BJ (cell line): ENCODE measurements at regions of chr10 and their contacts with region 1.

Region 1: DNA sequence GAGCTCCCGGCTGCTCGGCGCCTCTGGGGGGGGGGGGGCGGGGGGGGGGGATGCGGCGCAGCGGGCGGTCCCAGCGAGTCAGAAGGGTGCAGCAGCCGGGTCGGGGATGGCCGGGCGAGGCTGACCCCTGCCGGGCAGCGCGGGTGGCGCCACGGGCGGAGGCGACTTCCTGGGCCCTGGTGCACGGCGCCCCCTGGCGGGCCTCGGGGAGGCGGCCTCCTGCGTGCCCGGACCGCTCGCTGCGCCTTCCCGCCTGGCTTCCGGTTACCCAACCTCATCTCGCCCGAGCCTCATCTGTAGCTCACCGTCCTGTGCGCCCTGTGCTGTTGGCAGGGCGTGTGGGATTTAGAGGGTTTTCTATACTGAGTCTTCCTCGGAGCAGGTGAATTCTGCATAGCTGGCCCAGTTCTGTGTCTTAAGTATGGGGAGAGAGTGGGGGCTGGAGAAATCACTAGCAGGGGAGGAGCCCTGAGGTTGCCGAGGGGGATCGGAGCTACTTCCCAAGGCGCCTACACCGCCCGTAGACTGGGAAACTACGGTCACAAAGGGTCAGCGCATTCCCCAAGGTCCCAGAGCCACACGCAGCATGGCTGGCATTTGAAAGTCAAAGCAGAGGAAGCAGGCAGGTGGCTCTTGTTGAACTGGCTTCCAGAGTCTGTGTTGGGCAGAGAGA is 28.3 kb upstream of the WDFY4 start:
- DNase-seq: peak; percentile 36
- H3K4me3 ChIP-seq: peak overlapping the region; percentile 62
- H3K27me3 ChIP-seq: peaks cover 4% of the 10 kb centered on the region
- CTCF ChIP-seq: peak; percentile 59

Region 2: DNA sequence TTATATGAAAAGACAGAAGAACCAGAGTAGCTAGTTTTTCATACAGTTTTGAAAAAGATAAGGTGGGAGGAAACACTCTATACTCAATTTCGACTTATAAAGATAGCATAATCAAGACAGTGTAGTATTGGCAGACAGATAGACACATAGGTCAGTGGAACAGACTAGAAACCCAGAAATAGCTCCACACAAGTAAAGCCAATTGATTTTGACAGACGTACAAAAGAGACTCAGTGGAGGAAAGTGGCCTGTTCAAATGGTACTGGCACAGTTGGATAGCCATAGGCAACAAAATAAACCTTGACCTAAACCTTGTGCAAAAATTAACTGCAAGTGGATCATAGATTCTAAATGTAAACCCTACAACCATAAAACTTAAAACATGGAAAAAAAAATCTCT is 303.1 kb before region 1 on chr10:
- CTCF ChIA-PET with region 1: interaction called, 13 read pairs
- POLR2A ChIA-PET with region 1: no interaction called
- DNase-seq: no peak
- H3K4me3 ChIP-seq: no peak overlapping the region
- H3K27me3 ChIP-seq: no peaks in the 10 kb centered on the region
- CTCF ChIP-seq: no peak

Region 3: DNA sequence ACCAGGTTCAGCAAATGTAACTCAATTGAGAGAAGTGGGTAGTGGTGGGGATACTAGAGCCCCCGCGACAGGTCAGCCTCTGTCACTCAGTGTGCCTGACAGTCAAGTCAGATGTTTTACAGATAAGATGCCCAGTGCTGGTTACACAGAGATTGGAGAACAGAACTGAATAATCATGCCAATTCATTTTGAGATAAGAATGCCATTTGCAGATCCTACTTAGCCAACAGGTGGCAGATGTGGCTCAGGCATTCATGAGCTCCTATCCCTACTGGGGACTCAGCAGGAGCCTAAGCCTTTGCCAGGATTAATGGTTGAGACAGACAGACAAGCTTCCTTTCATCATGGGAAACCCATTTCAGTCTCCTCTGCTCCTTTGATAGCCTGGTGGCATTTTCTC is 212.1 kb before region 1 on chr10:
- CTCF ChIA-PET with region 1: interaction called, 21 read pairs
- POLR2A ChIA-PET with region 1: no interaction called
- DNase-seq: no peak
- H3K4me3 ChIP-seq: no peak overlapping the region
- H3K27me3 ChIP-seq: no peaks in the 10 kb centered on the region
- CTCF ChIP-seq: peak; percentile 30

Region 4: GRCh38 chr10:48572414-48572813 is 84.0 kb before region 1 on chr10:
- CTCF ChIA-PET with region 1: interaction called, 84 read pairs
- POLR2A ChIA-PET with region 1: no interaction called
- DNase-seq: no peak
- H3K4me3 ChIP-seq: no peak overlapping the region
- H3K27me3 ChIP-seq: no peaks in the 10 kb centered on the region
- CTCF ChIP-seq: no peak

Region 5: DNA sequence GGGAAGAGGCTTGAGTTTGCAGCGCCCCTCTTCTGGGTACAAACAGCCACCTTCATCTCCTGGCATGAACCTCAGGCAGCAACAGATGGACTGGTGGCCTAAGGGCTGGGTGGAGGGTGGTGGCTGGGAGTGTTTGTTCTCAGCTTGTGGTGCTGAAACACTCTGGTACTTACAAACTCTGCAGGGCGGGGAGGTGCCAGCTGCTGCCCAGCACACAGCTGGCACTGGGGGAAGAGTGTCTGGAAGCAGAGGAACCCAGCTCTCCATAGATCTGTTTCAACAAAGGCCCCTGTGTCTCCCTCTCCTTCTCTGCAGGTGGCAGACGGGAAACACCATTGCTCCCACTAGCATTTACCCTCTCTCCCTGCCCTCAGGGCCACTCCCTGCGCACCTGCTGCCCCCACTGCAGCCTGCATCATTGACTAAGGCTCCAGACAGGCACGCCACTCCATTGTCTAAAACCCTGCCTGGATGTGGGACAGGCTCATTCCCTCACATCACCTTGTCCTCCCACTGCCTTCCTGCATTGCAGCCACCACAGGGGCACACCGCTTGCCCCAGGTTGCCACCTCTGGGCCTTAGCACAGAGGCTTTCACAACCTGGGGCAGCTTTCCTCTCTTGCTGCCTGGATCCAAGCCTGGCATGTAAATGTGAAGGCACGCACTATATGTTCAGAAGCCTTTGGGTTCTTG is 58.0 kb before region 1 on chr10:
- CTCF ChIA-PET with region 1: interaction called, 40 read pairs
- POLR2A ChIA-PET with region 1: no interaction called
- DNase-seq: no peak
- H3K4me3 ChIP-seq: no peak overlapping the region
- H3K27me3 ChIP-seq: no peaks in the 10 kb centered on the region
- CTCF ChIP-seq: no peak

Region 6: DNA sequence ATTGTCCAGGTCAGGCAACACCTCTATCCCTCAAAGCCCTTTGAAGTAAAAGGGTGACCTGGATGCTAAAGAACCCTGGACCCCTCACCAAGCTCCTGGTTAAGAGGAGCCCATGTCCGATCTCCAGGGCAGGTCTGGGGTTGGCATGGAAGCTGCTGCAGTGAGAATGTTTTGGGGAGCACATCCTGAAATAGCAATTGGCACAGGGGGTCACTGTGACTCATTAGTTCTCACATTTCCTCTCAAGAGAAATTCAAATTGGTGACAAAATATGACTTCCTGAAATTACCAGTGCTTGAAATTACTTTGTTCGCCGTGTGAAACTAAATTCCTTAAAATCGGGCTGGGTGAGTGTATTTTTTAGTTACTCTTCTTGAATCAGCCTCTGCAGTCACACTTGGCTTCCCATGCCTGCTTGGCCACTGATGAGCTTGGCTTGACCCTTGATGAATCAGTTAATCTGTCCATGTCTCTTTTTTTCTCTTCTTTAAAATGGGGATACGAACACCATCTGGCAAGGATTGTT is 32.7 kb before region 1 on chr10:
- CTCF ChIA-PET with region 1: interaction called, 97 read pairs
- POLR2A ChIA-PET with region 1: no interaction called
- DNase-seq: no peak
- H3K4me3 ChIP-seq: no peak overlapping the region
- H3K27me3 ChIP-seq: no peaks in the 10 kb centered on the region
- CTCF ChIP-seq: no peak

Region 7: GRCh38 chr10:48691812-48692528 is 35.6 kb after region 1 on chr10:
- CTCF ChIA-PET with region 1: no interaction called
- POLR2A ChIA-PET with region 1: no interaction called
- DNase-seq: no peak
- H3K4me3 ChIP-seq: no peak overlapping the region
- H3K27me3 ChIP-seq: peaks cover 4% of the 10 kb centered on the region
- CTCF ChIP-seq: no peak

Region 8: DNA sequence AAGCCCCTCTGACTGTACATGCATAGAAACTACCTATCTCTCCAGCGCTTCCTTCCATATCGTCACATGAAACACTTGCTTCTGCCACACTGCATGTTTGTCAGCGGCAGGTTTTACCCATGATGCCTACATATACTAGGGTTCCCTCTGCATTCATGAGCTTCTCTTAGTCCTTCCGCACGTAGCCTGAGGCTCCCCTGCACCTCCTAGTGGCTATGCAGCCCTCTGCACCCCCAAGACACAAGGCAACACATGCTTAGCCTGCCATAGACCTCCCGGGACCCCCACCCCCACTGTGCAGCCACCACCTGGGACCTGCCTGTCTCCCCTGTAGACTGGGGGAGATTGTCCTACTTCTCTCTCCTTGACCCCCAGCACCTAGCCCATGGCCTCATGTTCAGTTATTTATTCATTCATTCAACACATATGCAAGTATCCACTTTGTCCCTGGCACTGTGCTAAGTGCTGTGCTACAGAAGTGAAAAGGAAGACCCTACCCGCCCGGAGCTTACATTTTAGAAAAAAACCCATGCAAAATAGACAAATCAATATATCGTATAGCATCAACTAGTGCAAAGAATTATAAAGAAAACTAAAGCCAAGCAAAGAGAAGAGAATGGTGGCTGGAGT is 508.3 kb after region 1 on chr10:
- CTCF ChIA-PET with region 1: interaction called, 23 read pairs
- POLR2A ChIA-PET with region 1: no interaction called
- DNase-seq: no peak
- H3K4me3 ChIP-seq: no peak overlapping the region
- H3K27me3 ChIP-seq: no peaks in the 10 kb centered on the region
- CTCF ChIP-seq: peak; percentile 64